MCF 10A (cell line): ENCODE measurements at regions of chr20 and their contacts with region 1.

Region 1: DNA sequence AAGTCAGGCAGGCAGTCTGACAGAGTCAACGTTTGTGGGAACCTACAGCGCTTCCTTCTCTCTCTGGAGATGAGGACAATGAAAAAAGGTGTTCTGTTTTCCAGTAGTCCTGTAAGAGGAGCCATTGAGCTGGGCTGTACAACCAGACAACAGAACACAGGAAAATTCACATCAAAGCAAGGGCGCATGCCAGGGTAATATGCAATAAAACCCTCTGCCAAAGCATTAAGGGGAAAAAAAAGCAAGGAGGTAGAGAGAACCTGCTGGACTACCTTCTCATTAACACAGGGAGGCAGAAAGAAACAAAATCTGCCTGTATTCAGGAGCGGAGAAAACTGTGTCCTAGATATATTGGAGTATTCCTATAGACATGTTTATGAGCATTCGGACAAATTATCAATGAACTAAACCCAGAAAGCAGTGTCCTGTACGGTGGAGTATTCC is 1.3 kb downstream of the RNF24 start:
- DNase-seq: peak; percentile 89
- H3K4me3 Mint-ChIP-seq: peak overlapping the region; percentile 74
- H3K27ac Mint-ChIP-seq: peak overlapping the region; percentile 46
- H3K4me1 Mint-ChIP-seq: peaks cover 32% of the 10 kb centered on the region
- H3K27me3 Mint-ChIP-seq: no peaks in the 10 kb centered on the region
- CTCF ChIP-seq: peak; percentile 79

Region 2: GRCh38 chr20:3995067-3995748 is 18.8 kb before region 1 on chr20:
- CTCF ChIA-PET with region 1: interaction called, 13 read pairs
- POLR2A ChIA-PET with region 1: interaction called, 9 read pairs
- intact Hi-C with region 1: no loop called
- DNase-seq: peak; percentile 17
- H3K4me3 Mint-ChIP-seq: no peak overlapping the region
- H3K27ac Mint-ChIP-seq: peak overlapping the region; percentile 27
- H3K4me1 Mint-ChIP-seq: peaks cover 16% of the 10 kb centered on the region
- H3K27me3 Mint-ChIP-seq: no peaks in the 10 kb centered on the region
- CTCF ChIP-seq: no peak

Region 3: DNA sequence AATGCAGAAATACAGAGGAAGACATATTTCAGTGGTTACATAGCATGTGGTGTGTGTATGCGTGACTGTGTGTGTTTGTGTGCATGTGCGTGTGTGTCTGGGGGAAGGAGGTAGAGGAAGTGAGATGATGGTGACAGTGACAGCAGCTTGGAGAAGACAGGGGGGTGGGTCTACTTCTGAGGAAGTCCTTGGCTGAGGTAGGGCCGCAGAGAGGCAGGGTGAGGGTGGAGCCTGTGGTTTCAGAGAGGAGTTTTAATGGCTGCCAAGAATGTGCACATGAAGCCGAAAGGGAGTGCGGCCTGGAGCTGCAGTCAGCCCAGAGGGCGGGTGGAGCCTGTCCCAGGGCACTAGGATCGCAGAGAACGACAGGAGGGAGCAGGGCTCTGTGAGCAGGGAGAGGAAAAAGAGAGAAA is 24.0 kb after region 1 on chr20:
- CTCF ChIA-PET with region 1: interaction called, 5 read pairs
- POLR2A ChIA-PET with region 1: interaction called, 7 read pairs
- intact Hi-C with region 1: loop called (anchors 1 kb)
- DNase-seq: peak; percentile 70
- H3K4me3 Mint-ChIP-seq: peak overlapping the region; percentile 44
- H3K27ac Mint-ChIP-seq: peak overlapping the region; percentile 57
- H3K4me1 Mint-ChIP-seq: peaks cover 37% of the 10 kb centered on the region
- H3K27me3 Mint-ChIP-seq: no peaks in the 10 kb centered on the region
- CTCF ChIP-seq: no peak

Region 4: GRCh38 chr20:4064144-4064909 is 50.3 kb after region 1 on chr20:
- CTCF ChIA-PET with region 1: interaction called, 10 read pairs
- POLR2A ChIA-PET with region 1: interaction called, 18 read pairs
- intact Hi-C with region 1: no loop called
- DNase-seq: peak; percentile 95
- H3K4me3 Mint-ChIP-seq: peak overlapping the region; percentile 40
- H3K27ac Mint-ChIP-seq: peak overlapping the region; percentile 90
- H3K4me1 Mint-ChIP-seq: peaks cover 73% of the 10 kb centered on the region
- H3K27me3 Mint-ChIP-seq: no peaks in the 10 kb centered on the region
- CTCF ChIP-seq: no peak

Region 5: DNA sequence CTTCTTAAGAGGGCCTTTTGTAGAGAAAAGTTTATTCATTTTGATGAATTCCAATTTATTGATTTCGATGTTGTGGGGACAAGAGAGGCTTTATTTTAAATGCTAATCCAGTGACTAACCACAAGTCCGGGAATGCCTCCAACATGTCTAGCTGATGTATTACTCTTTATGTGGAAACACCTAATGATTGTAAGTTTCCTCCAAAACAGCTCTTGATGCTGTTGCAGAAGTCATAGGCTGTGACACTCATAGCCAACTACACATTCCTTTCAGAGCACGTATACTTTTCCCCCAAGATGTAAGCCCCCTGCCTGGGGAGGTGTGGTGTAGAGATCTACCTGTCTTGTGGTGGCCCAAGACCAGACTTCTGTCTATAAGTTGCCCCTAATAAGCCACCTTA is 62.6 kb after region 1 on chr20:
- CTCF ChIA-PET with region 1: interaction called, 25 read pairs
- POLR2A ChIA-PET with region 1: interaction called, 11 read pairs
- intact Hi-C with region 1: loop called (anchors 1 kb)
- DNase-seq: peak; percentile 78
- H3K4me3 Mint-ChIP-seq: no peak overlapping the region
- H3K27ac Mint-ChIP-seq: peak overlapping the region; percentile 44
- H3K4me1 Mint-ChIP-seq: peaks cover 28% of the 10 kb centered on the region
- H3K27me3 Mint-ChIP-seq: no peaks in the 10 kb centered on the region
- CTCF ChIP-seq: no peak

Region 6: GRCh38 chr20:4091490-4092479 is 77.7 kb after region 1 on chr20:
- CTCF ChIA-PET with region 1: interaction called, 81 read pairs
- POLR2A ChIA-PET with region 1: interaction called, 3 read pairs
- intact Hi-C with region 1: no loop called
- DNase-seq: peak; percentile 65
- H3K4me3 Mint-ChIP-seq: no peak overlapping the region
- H3K27ac Mint-ChIP-seq: no peak overlapping the region
- H3K4me1 Mint-ChIP-seq: peaks cover 5% of the 10 kb centered on the region
- H3K27me3 Mint-ChIP-seq: no peaks in the 10 kb centered on the region
- CTCF ChIP-seq: peak; percentile 51